ENCODE measurements at regions of chr12 and their contacts with region 1.

Region 1: DNA sequence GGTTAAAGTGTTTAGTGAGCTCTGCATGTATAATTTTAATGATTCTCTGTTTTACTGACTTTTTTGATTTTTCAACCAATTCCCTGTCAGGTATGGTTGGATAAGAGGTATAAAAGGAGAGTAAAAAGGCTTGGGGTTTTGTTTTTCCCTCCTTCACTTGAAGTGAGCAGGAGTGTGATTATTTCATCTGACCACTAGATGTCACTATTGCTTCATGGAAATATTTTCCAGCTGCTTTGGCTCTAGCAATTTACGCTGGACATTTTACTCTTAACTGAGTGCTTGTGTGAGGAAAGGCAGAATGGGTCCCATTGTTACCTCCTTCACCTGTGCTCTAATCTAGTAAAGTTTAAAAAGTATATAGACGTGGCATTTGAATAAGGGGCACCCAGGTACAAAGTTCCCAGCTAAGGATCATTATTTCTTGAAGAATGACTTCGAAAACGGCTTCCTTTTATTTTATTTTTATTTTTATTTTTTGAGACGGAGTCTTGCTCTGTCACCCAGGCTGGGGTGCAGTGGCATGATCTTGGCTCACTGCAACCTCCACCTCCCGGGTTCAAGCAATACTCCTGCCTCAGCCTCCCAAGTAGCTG is 66.5 kb downstream of the TBC1D30 start:
- DNase-seq: peak; percentile 61
- ATAC-seq: peak; percentile 70
- H3K4me3 ChIP-seq: no peak overlapping the region
- H3K27ac ChIP-seq: no peak overlapping the region
- H3K4me1 ChIP-seq: peaks cover 10% of the 10 kb centered on the region
- H3K27me3 ChIP-seq: no peaks in the 10 kb centered on the region; a peak in 1 of 5 replicates
- CTCF ChIP-seq: peak; percentile 81
- EP300 ChIP-seq: no peak
- POLR2A ChIP-seq: no peak
- RAD21 ChIP-seq: peak; percentile 87

Region 2: DNA sequence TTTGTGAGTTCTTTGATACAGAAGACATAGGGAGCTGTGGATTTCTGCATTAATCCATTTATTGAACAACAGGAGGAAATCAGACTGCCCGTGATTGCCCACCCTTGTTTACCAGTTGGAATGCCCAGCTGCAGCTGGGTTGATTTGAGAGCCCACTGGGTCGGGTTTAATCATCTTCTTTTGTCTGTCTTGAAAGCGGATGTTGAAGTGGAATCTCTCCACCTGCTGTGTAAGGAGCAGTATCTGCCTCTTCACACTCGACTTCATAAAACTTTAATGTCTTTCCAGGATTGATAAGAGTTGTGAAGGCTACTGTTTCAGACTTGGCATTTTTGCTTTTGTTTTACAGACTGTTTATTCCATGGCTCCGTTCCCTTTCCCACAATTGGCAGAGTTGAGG is 26.7 kb before region 1 on chr12:
- CTCF ChIA-PET with region 1: no interaction called
- POLR2A ChIA-PET with region 1: no interaction called
- in situ Hi-C with region 1: no loop called
- intact Hi-C with region 1: no loop called
- DNase-seq: no peak
- ATAC-seq: no peak
- H3K4me3 ChIP-seq: no peak overlapping the region
- H3K27ac ChIP-seq: no peak overlapping the region
- H3K4me1 ChIP-seq: no peaks in the 10 kb centered on the region
- H3K27me3 ChIP-seq: no peaks in the 10 kb centered on the region
- CTCF ChIP-seq: no peak
- EP300 ChIP-seq: no peak
- POLR2A ChIP-seq: no peak
- RAD21 ChIP-seq: no peak

Region 3: GRCh38 chr12:65100140-65100539 is 209.2 kb after region 1 on chr12:
- CTCF ChIA-PET with region 1: interaction called, 6 read pairs
- POLR2A ChIA-PET with region 1: no interaction called
- in situ Hi-C with region 1: no loop called
- intact Hi-C with region 1: loop called (anchors 1 kb)
- DNase-seq: peak; percentile 10
- ATAC-seq: peak; percentile 52; the same call in 2 of the 3 replicates
- H3K4me3 ChIP-seq: no peak overlapping the region
- H3K27ac ChIP-seq: no peak overlapping the region
- H3K4me1 ChIP-seq: no peaks in the 10 kb centered on the region
- H3K27me3 ChIP-seq: no peaks in the 10 kb centered on the region
- CTCF ChIP-seq: peak; percentile 61
- EP300 ChIP-seq: no peak
- POLR2A ChIP-seq: no peak
- RAD21 ChIP-seq: no peak; the same call in 1 of the 2 replicates

Region 4: DNA sequence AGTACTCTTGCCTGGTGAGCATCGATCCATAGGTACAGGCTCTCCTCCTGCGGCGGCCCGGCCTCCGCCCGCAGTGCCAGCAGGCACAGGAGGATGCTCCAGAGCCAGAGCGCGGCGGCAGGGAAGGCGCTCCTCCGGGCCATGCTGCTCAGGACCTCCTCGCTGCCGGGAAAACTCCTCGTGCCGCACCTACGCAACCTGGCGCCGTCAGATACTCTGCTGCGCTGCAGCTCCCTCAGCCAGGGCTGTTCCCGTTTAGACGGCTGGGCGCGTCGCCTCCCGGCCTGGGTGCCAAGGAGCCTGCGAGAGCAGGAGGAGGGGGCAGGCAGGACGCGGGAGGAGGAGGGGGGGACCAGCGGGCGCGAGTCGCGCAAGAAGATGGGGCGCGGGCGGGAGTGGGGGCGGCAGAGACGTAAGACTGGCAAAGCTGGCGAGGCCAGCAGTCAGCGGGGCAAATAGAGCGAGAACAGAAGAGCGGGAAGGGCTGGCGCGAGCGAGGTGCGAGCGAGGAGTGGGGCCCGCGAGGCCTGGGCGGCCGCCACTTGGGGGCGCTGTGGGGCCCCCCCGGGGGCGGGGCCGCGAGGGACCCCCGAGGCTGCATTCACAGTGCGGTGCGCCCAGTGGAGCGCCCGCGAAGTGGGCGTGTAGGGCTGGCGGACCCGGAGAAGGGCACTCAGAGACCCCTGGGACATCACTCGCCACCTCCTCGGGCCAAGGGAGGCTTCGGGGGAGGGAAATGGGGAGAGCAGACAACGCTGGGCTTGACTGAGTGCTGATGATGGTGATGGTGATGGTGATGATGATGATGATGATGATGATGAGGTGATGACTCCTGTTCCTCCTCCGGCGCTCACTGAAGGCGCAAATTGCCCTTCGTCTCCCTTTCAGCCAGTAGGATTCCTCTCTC is 230.3 kb after region 1 on chr12 and contains the start of gene WIF1:
- CTCF ChIA-PET with region 1: interaction called, 24 read pairs
- POLR2A ChIA-PET with region 1: no interaction called
- in situ Hi-C with region 1: loop called (anchors 5 kb)
- intact Hi-C with region 1: loop called (anchors 1 kb)
- DNase-seq: no peak
- ATAC-seq: no peak
- H3K4me3 ChIP-seq: no peak within 1 kb of the TSS
- H3K27ac ChIP-seq: no peak within 1 kb of the TSS
- H3K4me1 ChIP-seq: no peaks in the 10 kb centered on the region
- H3K27me3 ChIP-seq: no peaks in the 10 kb centered on the region
- CTCF ChIP-seq: no peak
- EP300 ChIP-seq: no peak
- POLR2A ChIP-seq: no peak
- RAD21 ChIP-seq: no peak
- total RNA-seq, gene WIF1: not detected in 2 replicates

Region 5: GRCh38 chr12:65269603-65270002 is 378.6 kb after region 1 on chr12:
- CTCF ChIA-PET with region 1: no interaction called
- POLR2A ChIA-PET with region 1: no interaction called
- in situ Hi-C with region 1: loop called (anchors 25 kb)
- intact Hi-C with region 1: no loop called
- DNase-seq: no peak
- ATAC-seq: no peak
- H3K4me3 ChIP-seq: no peak overlapping the region
- H3K27ac ChIP-seq: no peak overlapping the region
- H3K4me1 ChIP-seq: no peaks in the 10 kb centered on the region
- H3K27me3 ChIP-seq: no peaks in the 10 kb centered on the region
- CTCF ChIP-seq: no peak
- EP300 ChIP-seq: no peak
- POLR2A ChIP-seq: no peak
- RAD21 ChIP-seq: no peak

Region 6: GRCh38 chr12:66107451-66107915 is 1216.5 kb after region 1 on chr12:
- CTCF ChIA-PET with region 1: no interaction called
- POLR2A ChIA-PET with region 1: no interaction called
- in situ Hi-C with region 1: loop called (anchors 25 kb)
- intact Hi-C with region 1: no loop called
- DNase-seq: peak; percentile 93
- ATAC-seq: peak; percentile 96
- H3K4me3 ChIP-seq: peak overlapping the region in 1 of 3 experiments; percentile 12; a peak in 2 of 6 replicates
- H3K27ac ChIP-seq: no peak overlapping the region
- H3K4me1 ChIP-seq: peaks cover 12% of the 10 kb centered on the region
- H3K27me3 ChIP-seq: no peaks in the 10 kb centered on the region
- CTCF ChIP-seq: peak; percentile 88
- EP300 ChIP-seq: no peak
- POLR2A ChIP-seq: no peak
- RAD21 ChIP-seq: peak; percentile 72